CD4-positive, alpha-beta T cell (primary cell): ENCODE measurements at regions of chr7 and their contacts with region 1.

Region 1: DNA sequence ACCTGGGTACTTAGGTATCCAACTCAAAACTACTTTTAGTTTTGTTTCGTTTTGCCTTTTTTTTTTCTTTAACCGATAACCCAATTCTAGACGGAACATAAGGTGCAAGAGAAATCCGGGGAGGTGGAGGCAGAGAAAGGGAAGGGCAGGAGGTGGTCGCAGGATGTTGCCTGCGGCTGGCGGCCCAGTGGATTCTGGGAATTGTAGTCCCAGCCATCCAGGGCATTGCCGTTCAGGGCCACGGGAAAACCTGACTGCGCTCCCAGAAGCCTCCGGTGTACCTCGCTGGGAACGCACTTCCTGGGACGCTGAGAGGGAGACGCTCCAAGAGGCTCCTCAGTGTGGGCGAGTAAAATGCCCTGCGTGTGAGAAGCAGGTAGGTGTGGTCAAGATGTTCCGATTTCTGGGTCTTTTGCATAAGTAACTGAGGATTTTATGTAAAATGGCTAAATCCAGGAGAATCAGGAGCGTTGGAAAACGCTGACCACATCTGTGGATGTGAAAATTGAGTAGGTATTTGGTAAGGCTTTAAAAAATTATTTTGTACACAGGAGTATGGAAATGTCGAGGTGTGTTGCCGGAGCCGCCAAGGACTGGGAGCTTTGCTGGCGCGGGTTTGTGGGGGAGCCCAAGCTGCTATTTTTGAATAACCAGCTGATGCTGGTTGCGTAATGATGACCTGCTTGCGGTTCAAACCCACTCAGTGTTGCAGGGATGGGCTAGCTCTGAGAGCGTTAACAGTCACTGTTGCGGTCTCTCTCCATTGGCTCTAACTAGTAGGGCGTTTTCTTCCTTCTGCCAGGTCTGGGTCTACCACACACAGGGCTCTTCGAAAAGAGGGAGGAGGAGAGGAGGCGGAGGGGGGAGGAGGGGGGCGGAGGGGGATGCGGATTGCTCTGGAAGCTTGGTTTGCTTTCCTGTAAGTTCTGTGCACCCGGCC is at the start of gene CLDN12:
- DNase-seq: peak; percentile 32 to 92 (median 58)
- ATAC-seq: peak; percentile 99
- H3K4me3 ChIP-seq: peak within 1 kb of the TSS; percentile 69
- H3K4me3 Mint-ChIP-seq: peak within 1 kb of the TSS; percentile 96
- H3K27ac ChIP-seq: no peak within 1 kb of the TSS
- H3K27ac Mint-ChIP-seq: peak within 1 kb of the TSS; percentile 84
- H3K4me1 ChIP-seq: peaks cover 3% of the 10 kb centered on the region
- H3K4me1 Mint-ChIP-seq: peaks cover 17% of the 10 kb centered on the region
- H3K27me3 ChIP-seq: no peaks in the 10 kb centered on the region
- H3K27me3 Mint-ChIP-seq: no peaks in the 10 kb centered on the region
- CTCF ChIP-seq: no peak
- total RNA-seq, gene CLDN12: 1.1 to 1.4 TPM

Region 2: GRCh38 chr7:90346336-90347125 is 56.9 kb before region 1 on chr7 and contains the start of gene GTPBP10:
- CTCF ChIA-PET with region 1: interaction called, 6 read pairs
- POLR2A ChIA-PET with region 1: interaction called, 9 read pairs
- intact Hi-C with region 1: loop called (anchors 1 kb)
- DNase-seq: peak; percentile 92 to 99 (median 93)
- ATAC-seq: peak; percentile 91
- H3K4me3 ChIP-seq: peak within 1 kb of the TSS; percentile 66
- H3K4me3 Mint-ChIP-seq: peak within 1 kb of the TSS; percentile 98
- H3K27ac ChIP-seq: peak within 1 kb of the TSS; percentile 81 to 86
- H3K27ac Mint-ChIP-seq: peak within 1 kb of the TSS; percentile 99
- H3K4me1 ChIP-seq: peaks cover 14% of the 10 kb centered on the region
- H3K4me1 Mint-ChIP-seq: peaks cover 61% of the 10 kb centered on the region
- H3K27me3 ChIP-seq: no peaks in the 10 kb centered on the region
- H3K27me3 Mint-ChIP-seq: no peaks in the 10 kb centered on the region
- CTCF ChIP-seq: peak; percentile 86
- total RNA-seq, gene GTPBP10: 11.8 to 13.7 TPM